Mammary epithelial cell (primary cell): ENCODE measurements at regions of chr11 and their contacts with region 1.

Region 1: DNA sequence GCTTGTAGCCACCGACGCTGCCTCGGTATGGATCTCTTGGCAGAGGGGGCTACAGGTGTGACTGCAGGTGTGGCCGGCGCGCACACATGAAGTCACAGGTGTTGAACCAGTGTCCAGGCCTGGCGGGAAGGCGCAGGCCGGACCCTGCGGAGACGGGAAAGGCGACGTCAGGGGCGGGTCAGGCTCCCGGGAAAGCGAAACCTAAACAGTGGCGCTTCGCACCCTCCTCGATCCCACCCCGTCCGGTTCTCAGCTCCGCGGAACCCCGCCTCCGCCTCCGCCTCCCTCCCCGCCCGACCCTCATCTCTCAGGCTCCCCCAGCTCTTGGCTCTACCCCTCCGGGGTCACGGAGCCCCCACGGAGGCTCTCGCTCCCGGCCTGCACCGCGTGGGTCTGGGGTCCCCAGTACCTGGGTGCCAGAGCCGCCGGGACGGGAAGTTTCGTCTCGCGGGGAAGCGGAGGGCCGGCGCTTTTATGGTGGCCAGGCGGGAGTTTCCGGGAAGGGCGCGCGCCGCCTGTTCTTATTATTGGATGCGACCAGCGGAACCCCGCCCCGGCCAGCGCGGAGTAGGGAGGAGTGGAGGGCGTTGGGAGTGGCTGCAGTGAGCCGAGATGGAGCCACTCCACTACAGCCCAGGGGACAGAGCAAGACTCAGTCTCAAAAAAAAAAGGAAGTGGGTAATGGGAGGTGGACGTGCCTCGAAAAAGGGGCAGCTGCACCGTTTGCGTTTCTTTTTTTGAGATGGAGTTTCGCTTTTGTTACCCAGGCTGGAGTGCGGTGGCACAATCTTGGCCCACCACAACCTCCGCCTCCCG is at the start of gene IRF7:
- DNase-seq: peak; percentile 82
- H3K4me3 ChIP-seq: peak within 1 kb of the TSS; percentile 55 to 90 (median 60)
- H3K27ac ChIP-seq: peak within 1 kb of the TSS; percentile 71
- H3K4me1 ChIP-seq: peaks cover 22% of the 10 kb centered on the region
- H3K27me3 ChIP-seq: no peaks in the 10 kb centered on the region
- CTCF ChIP-seq: no peak
- total RNA-seq, gene IRF7: 1.0 to 4.4 TPM

Region 2: DNA sequence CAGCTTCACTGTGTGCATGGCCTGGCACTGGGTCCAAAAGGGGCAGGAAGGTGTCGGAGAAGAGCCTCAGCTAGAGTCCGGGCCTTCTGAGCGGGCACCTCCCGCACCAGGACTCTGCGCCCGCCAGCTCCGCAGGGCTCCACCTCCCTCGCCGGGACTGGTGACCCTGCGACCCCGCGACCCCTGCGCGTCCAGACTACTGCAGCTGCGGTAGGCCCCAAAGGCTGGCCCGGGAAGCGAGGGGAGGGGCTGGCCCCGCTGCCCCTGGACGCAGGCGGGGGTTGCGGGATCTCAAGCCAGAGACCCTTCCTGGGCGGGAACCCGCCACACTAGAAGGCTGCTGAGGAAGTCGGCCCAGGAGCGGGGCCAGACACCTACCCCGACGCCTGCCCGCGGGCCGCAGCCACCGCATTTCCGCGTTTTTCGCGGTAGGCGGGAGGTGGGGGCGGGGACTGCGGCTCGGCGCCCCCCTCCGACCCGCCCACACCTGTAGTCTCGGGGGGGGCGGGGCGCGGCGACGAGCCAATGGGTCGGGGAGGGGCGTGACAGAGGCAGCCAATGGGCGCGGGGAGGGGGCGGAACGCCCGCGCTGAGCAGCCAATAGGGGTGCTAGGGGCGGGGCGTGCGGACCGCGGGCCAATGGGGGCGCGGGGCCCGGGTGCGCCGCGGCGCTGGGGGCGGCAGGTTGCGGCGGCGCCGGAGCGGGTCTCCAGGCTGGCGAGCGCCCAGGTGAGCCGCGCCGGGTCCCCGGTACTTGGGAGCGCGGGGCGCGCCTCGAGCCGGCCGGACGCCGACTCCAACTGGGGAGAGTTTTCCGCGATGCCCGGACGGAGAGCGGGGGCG is 55.2 kb before region 1 on chr11 and contains the starts of genes LMNTD2 and RASSF7:
- CTCF ChIA-PET with region 1: no interaction called
- dilution Hi-C with region 1: loop called (anchors 5 kb)
- in situ Hi-C with region 1: no loop called
- intact Hi-C with region 1: loop called (anchors 1 kb)
- DNase-seq: peak; percentile 85
- H3K4me3 ChIP-seq: peak within 1 kb of the TSS; percentile 55 to 80 (median 80)
- H3K27ac ChIP-seq: peak within 1 kb of the TSS; percentile 62
- H3K4me1 ChIP-seq: peaks cover 32% of the 10 kb centered on the region
- H3K27me3 ChIP-seq: peaks cover 5% of the 10 kb centered on the region
- CTCF ChIP-seq: no peak
- total RNA-seq, gene LMNTD2: 2.3 to 7.6 TPM
- total RNA-seq, gene RASSF7: 33.3 to 36.1 TPM

Region 3: DNA sequence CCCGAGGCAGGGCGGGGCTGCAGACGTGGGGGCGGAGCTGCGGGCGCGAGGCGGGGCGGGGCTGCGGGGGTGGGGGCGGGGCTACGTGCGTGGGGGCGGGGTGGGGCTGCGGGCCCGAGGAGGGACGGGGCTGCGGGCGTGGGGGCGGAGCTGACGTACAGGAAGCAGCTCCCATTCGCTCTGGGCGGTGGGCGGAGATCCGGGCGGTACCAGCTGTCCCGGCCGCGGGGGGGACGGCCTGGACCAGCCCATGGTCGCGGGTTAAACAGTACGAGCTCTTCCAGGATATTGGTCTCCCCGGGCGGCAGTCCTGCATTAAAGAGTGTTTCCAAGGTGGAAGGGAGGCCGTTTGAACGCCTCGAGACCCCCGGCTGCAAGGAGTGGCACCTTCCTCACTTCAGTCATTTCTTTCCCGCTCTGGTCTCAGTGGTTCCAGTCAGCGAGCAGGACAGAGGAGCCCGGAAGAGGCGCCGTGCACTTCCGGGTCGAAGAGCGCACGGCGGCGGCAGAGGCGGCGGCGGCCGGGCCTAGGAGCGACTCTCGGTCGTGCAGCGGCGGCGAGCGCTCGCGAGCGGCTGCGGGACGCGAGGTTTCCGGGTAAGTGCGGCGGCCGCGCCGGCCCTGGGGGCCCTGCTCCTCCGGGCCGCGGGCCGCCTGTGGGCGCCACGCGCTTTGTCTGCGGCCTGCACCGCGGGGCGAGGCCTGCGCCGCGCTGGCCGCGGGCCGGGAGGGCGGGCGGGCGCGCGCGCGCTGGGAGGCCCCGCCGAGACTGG is 39.5 kb before region 1 on chr11 and contains the start of gene PHRF1:
- CTCF ChIA-PET with region 1: no interaction called
- dilution Hi-C with region 1: no loop called
- in situ Hi-C with region 1: no loop called
- intact Hi-C with region 1: loop called (anchors 2 kb)
- DNase-seq: peak; percentile 91
- H3K4me3 ChIP-seq: peak within 1 kb of the TSS; percentile 88 to 99 (median 93)
- H3K27ac ChIP-seq: peak within 1 kb of the TSS; percentile 99
- H3K4me1 ChIP-seq: peaks cover 37% of the 10 kb centered on the region
- H3K27me3 ChIP-seq: no peaks in the 10 kb centered on the region
- CTCF ChIP-seq: no peak
- total RNA-seq, gene PHRF1: 20.8 to 41.4 TPM

Region 4: GRCh38 chr11:645536-645935 is 29.8 kb after region 1 on chr11:
- CTCF ChIA-PET with region 1: no interaction called
- dilution Hi-C with region 1: no loop called
- in situ Hi-C with region 1: no loop called
- intact Hi-C with region 1: no loop called
- DNase-seq: no peak
- H3K4me3 ChIP-seq: no peak overlapping the region
- H3K27ac ChIP-seq: no peak overlapping the region
- H3K4me1 ChIP-seq: no peaks in the 10 kb centered on the region
- H3K27me3 ChIP-seq: no peaks in the 10 kb centered on the region
- CTCF ChIP-seq: no peak

Region 5: GRCh38 chr11:727859-728748 is 112.4 kb after region 1 on chr11:
- CTCF ChIA-PET with region 1: no interaction called
- dilution Hi-C with region 1: no loop called
- in situ Hi-C with region 1: no loop called
- intact Hi-C with region 1: no loop called
- DNase-seq: peak; percentile 94
- H3K4me3 ChIP-seq: no peak overlapping the region
- H3K27ac ChIP-seq: peak overlapping the region; percentile 55
- H3K4me1 ChIP-seq: peaks cover 51% of the 10 kb centered on the region
- H3K27me3 ChIP-seq: no peaks in the 10 kb centered on the region
- CTCF ChIP-seq: peak; percentile 86 to 100